ENCODE measurements at regions of chr6 and their contacts with region 1.

Region 1: DNA sequence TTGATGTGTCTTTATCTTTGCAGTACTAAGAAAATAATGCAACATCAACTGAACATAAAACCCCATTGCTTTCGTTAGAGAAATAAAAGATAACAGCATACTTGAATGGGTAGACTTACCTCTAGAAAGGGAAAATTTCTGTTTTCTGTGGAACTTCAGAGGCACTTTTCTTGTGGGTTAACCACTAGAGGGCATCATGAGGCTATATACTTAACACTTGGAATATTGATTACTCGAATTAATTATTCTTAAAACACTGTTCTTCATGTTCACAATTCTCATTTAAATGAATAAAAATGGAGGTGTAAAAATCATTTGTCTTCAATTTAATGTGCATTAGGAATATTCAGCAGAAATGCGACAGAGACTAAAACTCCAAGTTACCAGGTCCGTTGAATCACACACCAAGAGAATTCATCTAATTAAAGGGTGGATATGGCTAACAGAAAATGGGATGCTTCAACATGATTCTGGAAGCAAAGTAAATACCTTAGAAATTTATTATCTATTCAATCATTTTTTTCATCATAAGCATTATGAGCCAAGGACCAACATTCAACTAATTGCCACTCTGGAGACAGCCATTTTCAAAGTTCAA is 330.8 kb upstream of the PREP start:
- DNase-seq: no peak
- H3K4me3 ChIP-seq: no peak overlapping the region
- H3K4me3 Mint-ChIP-seq: no peak overlapping the region
- H3K27ac Mint-ChIP-seq: no peak overlapping the region
- H3K4me1 ChIP-seq: no peaks in the 10 kb centered on the region
- H3K4me1 Mint-ChIP-seq: peaks cover 6% of the 10 kb centered on the region
- H3K27me3 ChIP-seq: no peaks in the 10 kb centered on the region
- H3K27me3 Mint-ChIP-seq: no peaks in the 10 kb centered on the region
- CTCF ChIP-seq: peak; percentile 47 to 74

Region 2: GRCh38 chr6:105992315-105992961 is 258.8 kb after region 1 on chr6:
- CTCF ChIA-PET with region 1: no interaction called
- POLR2A ChIA-PET with region 1: no interaction called
- intact Hi-C with region 1: loop called (anchors 5 kb)
- DNase-seq: peak; percentile 75 to 88
- H3K4me3 ChIP-seq: peak overlapping the region; percentile 51
- H3K4me3 Mint-ChIP-seq: peak overlapping the region; percentile 73
- H3K27ac Mint-ChIP-seq: peak overlapping the region; percentile 73
- H3K4me1 ChIP-seq: peaks cover 16% of the 10 kb centered on the region; the same call in 1 of the 2 replicates
- H3K4me1 Mint-ChIP-seq: peaks cover 33% of the 10 kb centered on the region
- H3K27me3 ChIP-seq: no peaks in the 10 kb centered on the region
- H3K27me3 Mint-ChIP-seq: no peaks in the 10 kb centered on the region
- CTCF ChIP-seq: no peak

Region 3: DNA sequence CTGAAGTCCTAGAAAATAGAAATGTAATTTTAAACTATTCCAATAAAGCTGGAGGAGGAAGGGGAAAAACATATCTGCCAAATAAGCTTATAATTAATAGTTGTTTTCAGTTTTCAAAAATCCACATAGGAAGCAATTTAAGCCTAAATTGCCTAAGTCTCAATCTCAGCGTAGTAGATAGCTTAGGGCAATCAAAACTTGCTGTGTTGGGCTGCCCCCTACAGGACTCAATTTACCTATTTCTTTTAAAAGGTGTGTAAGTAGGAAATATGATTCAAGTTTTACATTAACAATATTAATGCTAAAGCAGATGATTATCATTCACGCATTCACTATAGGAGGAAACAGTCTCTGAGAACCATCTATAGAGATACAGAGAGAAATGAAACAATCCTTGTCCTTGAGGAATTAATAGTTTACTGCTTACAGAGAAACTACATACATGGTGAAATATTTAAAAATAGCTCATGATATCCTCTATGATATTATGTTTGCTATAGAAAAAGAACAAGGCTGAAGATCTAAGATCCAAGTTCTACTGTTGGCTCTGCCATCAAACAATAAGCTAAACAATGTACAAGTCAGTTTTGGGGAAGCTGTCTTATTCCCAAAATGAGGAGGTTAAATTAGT is 489.8 kb after region 1 on chr6:
- CTCF ChIA-PET with region 1: no interaction called
- POLR2A ChIA-PET with region 1: no interaction called
- intact Hi-C with region 1: loop called (anchors 1 kb)
- DNase-seq: peak; percentile 54 to 65
- H3K4me3 ChIP-seq: no peak overlapping the region
- H3K4me3 Mint-ChIP-seq: no peak overlapping the region
- H3K27ac Mint-ChIP-seq: no peak overlapping the region
- H3K4me1 ChIP-seq: peaks cover 6% of the 10 kb centered on the region; the same call in 1 of the 2 replicates
- H3K4me1 Mint-ChIP-seq: peaks cover 21% of the 10 kb centered on the region
- H3K27me3 ChIP-seq: no peaks in the 10 kb centered on the region
- H3K27me3 Mint-ChIP-seq: no peaks in the 10 kb centered on the region
- CTCF ChIP-seq: peak; percentile 52 to 56

Region 4: GRCh38 chr6:106300944-106301343 is 567.3 kb after region 1 on chr6:
- CTCF ChIA-PET with region 1: no interaction called
- POLR2A ChIA-PET with region 1: no interaction called
- intact Hi-C with region 1: loop called (anchors 10 kb)
- DNase-seq: peak in 1 of 2 experiments; percentile 24
- H3K4me3 ChIP-seq: no peak overlapping the region
- H3K4me3 Mint-ChIP-seq: no peak overlapping the region
- H3K27ac Mint-ChIP-seq: no peak overlapping the region
- H3K4me1 ChIP-seq: no peaks in the 10 kb centered on the region
- H3K4me1 Mint-ChIP-seq: no peaks in the 10 kb centered on the region
- H3K27me3 ChIP-seq: no peaks in the 10 kb centered on the region
- H3K27me3 Mint-ChIP-seq: no peaks in the 10 kb centered on the region
- CTCF ChIP-seq: peak; percentile 10 to 48